ENCODE measurements at regions of chr6 and their contacts with region 1.

Region 1: GRCh38 chr6:55276745-55277530 is 50.3 kb upstream of the GFRAL start:
- DNase-seq: no peak
- ATAC-seq: peak in 1 of 2 donors; percentile 46
- H3K4me3 ChIP-seq: peak overlapping the region in 2 of 4 donors; percentile 1 to 10
- H3K27ac ChIP-seq: peak overlapping the region in 1 of 4 donors; percentile 26
- H3K4me1 ChIP-seq: no peaks in the 10 kb centered on the region
- H3K27me3 ChIP-seq: no peaks in the 10 kb centered on the region
- CTCF ChIP-seq: peak in 4 of 5 experiments; percentile 20 to 55 (median 29)
- POLR2A ChIP-seq: no peak

Region 2: DNA sequence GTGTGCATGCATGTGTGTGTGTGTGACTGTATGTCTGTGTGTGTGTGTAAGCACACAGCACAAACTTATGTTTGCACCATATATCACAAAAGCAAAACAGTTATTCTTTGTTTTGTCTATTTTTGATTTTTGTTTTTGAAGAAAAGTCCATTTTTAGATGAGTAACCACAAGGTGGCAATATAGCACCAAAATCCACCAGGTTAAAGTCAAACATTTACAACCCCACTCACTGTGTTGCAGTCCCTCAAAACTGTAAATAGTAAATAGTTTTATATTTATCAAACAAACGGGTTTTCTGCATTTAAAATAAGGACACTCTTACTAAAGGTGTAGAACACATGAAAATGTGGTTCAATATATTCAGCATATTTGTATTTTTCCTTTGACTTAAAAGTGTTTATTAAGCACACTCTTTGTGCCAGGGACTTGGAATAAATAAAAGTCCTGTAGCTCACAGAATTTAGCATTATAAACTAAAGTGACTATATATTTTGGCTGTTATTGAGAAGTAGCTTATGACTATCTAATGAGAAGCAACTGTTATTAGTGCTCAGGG is 168.8 kb after region 1 on chr6:
- in situ Hi-C with region 1: no loop called
- intact Hi-C with region 1: loop called (anchors 10 kb)
- DNase-seq: no peak
- ATAC-seq: no peak
- H3K4me3 ChIP-seq: no peak overlapping the region
- H3K27ac ChIP-seq: no peak overlapping the region
- H3K4me1 ChIP-seq: no peaks in the 10 kb centered on the region
- H3K27me3 ChIP-seq: peaks cover 0 to 3% (median 0%) of the 10 kb centered on the region in 3 donors
- CTCF ChIP-seq: peak in 4 of 5 experiments; percentile 17 to 37 (median 32)
- POLR2A ChIP-seq: no peak

Region 3: DNA sequence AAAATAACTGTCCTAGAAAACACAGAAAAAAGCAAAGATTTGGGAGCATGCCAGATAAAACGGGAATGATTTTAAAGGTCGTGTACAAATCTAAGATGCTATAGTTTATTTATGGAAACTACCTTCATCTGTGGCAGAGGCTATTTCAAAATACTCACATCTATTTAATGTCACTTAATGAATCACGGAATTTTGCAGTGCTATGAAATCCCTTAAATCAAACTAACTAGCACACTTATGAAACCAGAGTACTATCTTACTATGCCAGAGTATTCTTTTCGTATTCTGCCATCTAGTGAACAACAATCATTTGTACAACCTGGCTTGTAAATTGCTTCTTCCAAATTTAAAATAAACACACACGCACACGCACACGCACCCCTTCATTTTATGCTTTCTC is 676.4 kb after region 1 on chr6:
- in situ Hi-C with region 1: loop called in 1 of 4 experiments (anchors 25 kb)
- intact Hi-C with region 1: no loop called
- DNase-seq: no peak
- ATAC-seq: peak in 1 of 2 donors; percentile 46
- H3K4me3 ChIP-seq: peak overlapping the region in 2 of 4 donors; percentile 6 to 29
- H3K27ac ChIP-seq: no peak overlapping the region
- H3K4me1 ChIP-seq: peaks cover 0 to 4% of the 10 kb centered on the region in 2 donors
- H3K27me3 ChIP-seq: no peaks in the 10 kb centered on the region
- CTCF ChIP-seq: peak in 2 of 5 experiments; percentile 9 to 19
- POLR2A ChIP-seq: no peak

Region 4: GRCh38 chr6:55980627-55981211 is 703.8 kb after region 1 on chr6:
- in situ Hi-C with region 1: loop called in 1 of 4 experiments (anchors 25 kb)
- intact Hi-C with region 1: no loop called
- DNase-seq: no peak
- ATAC-seq: no peak
- H3K4me3 ChIP-seq: no peak overlapping the region
- H3K27ac ChIP-seq: no peak overlapping the region
- H3K4me1 ChIP-seq: no peaks in the 10 kb centered on the region
- H3K27me3 ChIP-seq: no peaks in the 10 kb centered on the region
- CTCF ChIP-seq: peak; percentile 43 to 58 (median 55)
- POLR2A ChIP-seq: no peak

Region 5: DNA sequence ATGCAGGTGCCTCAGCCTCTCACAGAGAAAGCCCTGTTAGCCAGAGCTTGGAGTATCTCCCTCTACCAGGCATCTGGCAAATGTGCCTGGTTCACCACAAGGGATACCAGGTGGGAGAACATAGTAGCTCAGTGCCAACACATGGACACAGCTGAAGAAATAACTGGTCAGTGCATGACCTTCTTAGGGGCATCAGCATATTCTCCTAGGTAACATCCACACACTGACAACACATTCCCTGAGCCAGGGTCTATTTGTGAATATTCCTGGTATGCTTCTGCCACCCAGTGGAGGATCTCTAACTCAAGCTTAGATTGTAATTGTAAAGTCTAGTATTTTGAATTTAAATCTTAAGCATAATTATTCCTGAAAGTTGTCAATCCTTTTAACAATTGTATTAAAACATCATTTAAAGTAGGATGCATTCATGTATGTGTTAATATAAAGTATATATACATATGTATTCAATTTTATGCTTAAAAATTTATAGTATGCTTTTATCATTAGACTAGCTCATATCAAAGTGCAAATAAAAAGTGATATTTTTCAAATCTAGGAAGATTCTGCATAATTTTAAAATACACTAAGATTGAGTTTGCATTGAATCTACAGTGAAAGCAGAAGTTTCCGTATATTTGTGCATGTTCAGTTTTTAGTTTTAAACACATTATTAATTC is 1015.7 kb after region 1 on chr6:
- in situ Hi-C with region 1: loop called in 1 of 4 experiments (anchors 10 kb)
- intact Hi-C with region 1: no loop called
- DNase-seq: peak in 1 of 2 donors; percentile 4
- ATAC-seq: peak in 1 of 2 donors; percentile 46
- H3K4me3 ChIP-seq: no peak overlapping the region
- H3K27ac ChIP-seq: no peak overlapping the region
- H3K4me1 ChIP-seq: no peaks in the 10 kb centered on the region
- H3K27me3 ChIP-seq: no peaks in the 10 kb centered on the region
- CTCF ChIP-seq: peak; percentile 25 to 62 (median 52)
- POLR2A ChIP-seq: no peak

Measured in gastrocnemius medialis (tissue), 4 donors.